ENCODE measurements at regions of chr5 and their contacts with region 1.

Region 1: GRCh38 chr5:87069974-87070624 is 197.6 kb upstream of the RASA1 start:
- DNase-seq: peak; percentile 65
- H3K4me3 Mint-ChIP-seq: no peak overlapping the region
- H3K27ac Mint-ChIP-seq: no peak overlapping the region
- H3K4me1 Mint-ChIP-seq: peaks cover 10% of the 10 kb centered on the region
- H3K27me3 Mint-ChIP-seq: no peaks in the 10 kb centered on the region
- CTCF ChIP-seq: peak; percentile 52

Region 2: GRCh38 chr5:86869268-86869667 is 200.8 kb before region 1 on chr5:
- CTCF ChIA-PET with region 1: no interaction called
- POLR2A ChIA-PET with region 1: no interaction called
- intact Hi-C with region 1: no loop called
- DNase-seq: no peak
- H3K4me3 Mint-ChIP-seq: no peak overlapping the region
- H3K27ac Mint-ChIP-seq: no peak overlapping the region
- H3K4me1 Mint-ChIP-seq: no peaks in the 10 kb centered on the region
- H3K27me3 Mint-ChIP-seq: peaks cover 85% of the 10 kb centered on the region
- CTCF ChIP-seq: no peak

Region 3: DNA sequence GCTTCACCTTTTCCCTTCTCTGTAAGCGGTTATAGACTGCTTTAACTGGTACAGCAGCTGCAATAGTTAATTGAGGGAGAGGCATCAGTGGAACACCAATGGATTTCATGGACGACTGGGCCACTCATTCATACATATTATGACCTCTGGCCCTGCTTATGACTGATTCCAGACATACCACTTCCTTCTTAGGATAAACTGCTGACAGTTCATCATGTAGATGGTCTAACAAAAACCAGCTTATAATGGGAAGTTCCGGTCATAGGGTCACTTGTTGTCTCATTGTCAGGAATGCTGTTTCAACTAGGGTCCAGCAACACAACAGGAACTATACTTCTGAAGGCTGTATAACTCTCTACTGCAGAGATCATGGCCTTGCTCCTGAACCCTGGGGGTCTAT is 67.6 kb before region 1 on chr5:
- CTCF ChIA-PET with region 1: no interaction called
- POLR2A ChIA-PET with region 1: no interaction called
- intact Hi-C with region 1: no loop called
- DNase-seq: no peak
- H3K4me3 Mint-ChIP-seq: no peak overlapping the region
- H3K27ac Mint-ChIP-seq: no peak overlapping the region
- H3K4me1 Mint-ChIP-seq: no peaks in the 10 kb centered on the region
- H3K27me3 Mint-ChIP-seq: peaks cover 36% of the 10 kb centered on the region
- CTCF ChIP-seq: no peak

Region 4: GRCh38 chr5:87210743-87211430 is 140.8 kb after region 1 on chr5:
- CTCF ChIA-PET with region 1: interaction called, 5 read pairs
- POLR2A ChIA-PET with region 1: no interaction called
- intact Hi-C with region 1: loop called (anchors 2 kb)
- DNase-seq: no peak
- H3K4me3 Mint-ChIP-seq: no peak overlapping the region
- H3K27ac Mint-ChIP-seq: no peak overlapping the region
- H3K4me1 Mint-ChIP-seq: no peaks in the 10 kb centered on the region
- H3K27me3 Mint-ChIP-seq: no peaks in the 10 kb centered on the region
- CTCF ChIP-seq: no peak

Region 5: DNA sequence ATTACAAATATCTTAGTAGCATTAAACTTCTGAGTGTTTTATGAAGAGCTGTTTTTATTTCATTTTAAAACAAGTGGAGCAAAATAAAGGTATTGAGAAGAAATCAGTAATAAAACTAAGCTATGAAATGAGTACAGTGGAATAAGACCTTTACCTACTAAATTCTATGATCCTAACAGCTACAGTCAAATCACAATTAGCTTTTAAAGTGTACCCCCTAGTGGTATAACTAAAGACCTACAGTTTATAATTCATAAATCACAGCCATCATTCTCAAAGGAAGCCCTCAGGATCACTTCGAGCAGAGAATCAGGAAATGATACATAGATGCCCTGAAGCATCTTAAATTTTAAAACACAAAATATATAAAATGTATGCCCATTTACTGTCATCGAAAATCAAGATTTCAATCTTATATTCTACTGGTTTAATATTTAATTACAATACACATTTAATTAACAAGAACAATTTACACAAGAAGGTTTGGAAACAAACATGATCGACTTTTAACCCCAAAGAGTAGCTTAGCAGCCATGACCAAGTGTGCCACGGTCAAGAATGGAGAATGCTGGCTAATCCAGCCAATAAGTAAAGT is 330.3 kb after region 1 on chr5:
- CTCF ChIA-PET with region 1: interaction called, 38 read pairs
- POLR2A ChIA-PET with region 1: interaction called, 5 read pairs
- intact Hi-C with region 1: loop called (anchors 1 kb)
- DNase-seq: peak; percentile 46
- H3K4me3 Mint-ChIP-seq: no peak overlapping the region
- H3K27ac Mint-ChIP-seq: no peak overlapping the region
- H3K4me1 Mint-ChIP-seq: peaks cover 2% of the 10 kb centered on the region
- H3K27me3 Mint-ChIP-seq: no peaks in the 10 kb centered on the region
- CTCF ChIP-seq: peak; percentile 54

Region 6: GRCh38 chr5:87499478-87500410 is 429.6 kb after region 1 on chr5:
- CTCF ChIA-PET with region 1: no interaction called
- POLR2A ChIA-PET with region 1: no interaction called
- intact Hi-C with region 1: no loop called
- DNase-seq: peak; percentile 42
- H3K4me3 Mint-ChIP-seq: no peak overlapping the region
- H3K27ac Mint-ChIP-seq: no peak overlapping the region
- H3K4me1 Mint-ChIP-seq: peaks cover 5% of the 10 kb centered on the region
- H3K27me3 Mint-ChIP-seq: peaks cover 52% of the 10 kb centered on the region
- CTCF ChIP-seq: no peak